Heart right ventricle (tissue), 16 donors: ENCODE measurements at regions of chr1 and their contacts with region 1.

Region 1: DNA sequence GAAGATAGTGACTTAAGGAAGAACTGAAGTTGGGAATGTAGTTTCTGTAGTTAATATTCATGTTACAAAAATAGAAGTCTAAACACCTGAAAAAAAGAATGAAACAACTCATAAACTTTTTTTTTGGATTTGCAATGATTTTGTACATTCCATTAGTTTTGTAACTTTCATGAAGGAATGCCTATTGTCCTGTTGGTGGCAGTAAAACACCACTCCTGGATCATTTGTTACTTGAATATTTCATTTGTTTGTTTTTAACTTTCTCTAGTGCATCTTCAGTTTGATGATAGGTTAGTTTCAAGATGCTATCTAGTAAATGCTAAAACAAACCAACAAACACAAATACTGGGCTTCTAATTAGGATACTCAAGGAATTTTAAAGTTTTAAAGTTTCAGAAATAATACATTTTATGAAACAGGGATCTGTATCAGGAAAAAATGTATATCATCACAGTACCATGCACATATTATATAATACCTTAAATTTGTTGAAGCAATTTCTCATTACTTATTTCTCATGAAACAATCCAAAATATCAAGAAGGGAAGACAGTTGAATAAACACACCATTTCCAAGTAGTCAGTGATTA is 229.7 kb upstream of the CACYBP start:
- DNase-seq: no peak
- ATAC-seq: peak in 1 of 8 donors; percentile 48
- H3K4me3 ChIP-seq: no peak overlapping the region
- H3K27ac ChIP-seq: no peak overlapping the region
- H3K4me1 ChIP-seq: no peaks in the 10 kb centered on the region
- H3K27me3 ChIP-seq: no peaks in the 10 kb centered on the region
- CTCF ChIP-seq: peak; percentile 39 to 81 (median 75)

Region 2: GRCh38 chr1:174982971-174983689 is 213.1 kb after region 1 on chr1:
- intact Hi-C with region 1: loop called in 7 of 10 experiments (anchors 1 to 10 kb)
- DNase-seq: no peak
- ATAC-seq: no peak
- H3K4me3 ChIP-seq: no peak overlapping the region
- H3K27ac ChIP-seq: no peak overlapping the region
- H3K4me1 ChIP-seq: no peaks in the 10 kb centered on the region
- H3K27me3 ChIP-seq: no peaks in the 10 kb centered on the region
- CTCF ChIP-seq: peak; percentile 42 to 80 (median 73)

Region 3: GRCh38 chr1:174990382-174990999 is 220.4 kb after region 1 on chr1:
- intact Hi-C with region 1: loop called in 4 of 10 experiments (anchors 5 to 10 kb)
- DNase-seq: peak in 1 of 2 donors; percentile 27
- ATAC-seq: peak; percentile 47 to 93 (median 86)
- H3K4me3 ChIP-seq: peak overlapping the region in 9 of 10 donors; percentile 24 to 62 (median 50)
- H3K27ac ChIP-seq: peak overlapping the region; percentile 26 to 90 (median 76)
- H3K4me1 ChIP-seq: peaks cover 0 to 19% (median 3%) of the 10 kb centered on the region in 9 donors
- H3K27me3 ChIP-seq: no peaks in the 10 kb centered on the region
- CTCF ChIP-seq: no peak

Region 4: DNA sequence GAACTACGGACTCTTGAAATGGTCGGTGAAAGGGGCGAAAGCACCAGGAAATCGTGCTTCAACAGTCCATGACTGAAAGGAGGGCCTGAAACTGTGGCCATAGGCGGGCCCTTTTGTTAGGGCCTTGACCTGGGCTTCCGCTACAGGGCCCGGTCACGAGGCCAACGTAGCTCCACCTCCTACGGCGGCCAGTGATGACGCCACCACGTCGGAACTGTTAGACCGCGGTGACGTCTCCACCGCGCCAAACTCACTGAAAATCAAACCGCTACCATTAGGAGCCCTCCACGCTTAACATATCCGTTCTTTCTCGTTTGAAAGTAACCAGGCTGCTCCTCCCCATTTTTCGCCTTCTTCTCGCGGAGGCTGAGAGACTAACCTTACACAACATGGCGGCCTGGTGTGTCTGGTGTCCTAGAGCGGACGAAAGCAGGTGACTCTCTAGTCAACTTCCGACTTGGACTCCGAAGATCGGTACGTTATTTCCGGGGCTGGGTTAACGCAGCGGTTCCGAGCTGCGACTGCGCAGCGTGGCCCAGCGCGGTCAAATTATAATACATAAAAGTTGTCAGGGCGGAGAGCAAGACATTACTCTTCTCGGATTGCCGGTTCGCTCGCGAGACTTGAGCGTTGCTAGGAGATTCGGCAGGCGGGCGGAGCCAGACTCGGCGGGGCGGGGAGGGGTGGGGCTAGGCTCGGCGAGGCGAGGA is 229.3 kb after region 1 on chr1:
- intact Hi-C with region 1: loop called in 3 of 10 experiments (anchors 5 kb)
- DNase-seq: peak; percentile 98
- ATAC-seq: peak; percentile 89 to 97 (median 95)
- H3K4me3 ChIP-seq: peak overlapping the region; percentile 69 to 90 (median 80)
- H3K27ac ChIP-seq: peak overlapping the region; percentile 83 to 100 (median 96)
- H3K4me1 ChIP-seq: peaks cover 0 to 63% (median 18%) of the 10 kb centered on the region in 9 donors
- H3K27me3 ChIP-seq: no peaks in the 10 kb centered on the region
- CTCF ChIP-seq: no peak